PC-3 (cell line): ENCODE measurements at regions of chr19 and their contacts with region 1.

Region 1: DNA sequence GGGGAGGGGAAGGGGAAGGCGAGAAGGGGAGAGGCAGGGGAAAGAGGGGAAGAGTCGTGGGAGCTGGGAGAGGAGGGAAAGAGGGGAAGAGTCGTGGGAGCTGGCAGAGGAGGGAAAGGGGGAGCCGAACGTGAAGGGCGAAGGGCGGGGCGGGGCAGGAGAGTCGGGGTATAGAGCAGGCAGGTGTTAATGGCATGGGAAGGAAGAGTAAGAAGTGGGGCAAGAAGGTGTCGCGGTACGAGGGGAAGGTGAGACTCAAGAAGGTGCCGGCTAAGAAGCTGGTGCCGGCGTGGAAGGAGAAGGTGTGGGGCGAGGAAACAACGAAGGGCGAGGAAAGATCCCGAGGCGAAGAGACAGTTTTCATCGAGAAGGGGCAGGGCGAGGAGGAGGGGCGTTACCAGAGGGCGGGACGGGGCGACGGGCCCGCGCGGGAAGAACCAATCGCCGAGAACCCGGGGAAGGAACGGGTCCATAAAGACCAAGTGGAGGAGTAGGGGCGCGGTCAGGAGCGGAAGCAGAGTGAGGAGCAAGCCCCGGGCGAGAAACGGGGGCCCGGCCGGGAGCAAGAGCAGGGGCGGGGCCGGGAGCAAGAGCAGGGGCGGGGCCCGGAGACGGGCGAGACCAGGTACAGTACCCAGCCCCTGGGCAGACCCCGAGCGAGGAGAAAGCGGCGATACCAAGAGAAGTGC is 463 bp downstream of the CATSPERG start:
- DNase-seq: peak; percentile 93
- ATAC-seq: peak; percentile 75
- H3K4me3 ChIP-seq: peak overlapping the region; percentile 91
- H3K27ac ChIP-seq: peak overlapping the region; percentile 64
- H3K4me1 ChIP-seq: peaks cover 4% of the 10 kb centered on the region; the same call in 1 of the 2 replicates
- H3K27me3 ChIP-seq: no peaks in the 10 kb centered on the region
- CTCF ChIP-seq: no peak

Region 2: GRCh38 chr19:38224014-38224862 is 111.9 kb before region 1 on chr19 and contains the start of gene DPF1:
- CTCF ChIA-PET with region 1: no interaction called
- POLR2A ChIA-PET with region 1: no interaction called
- intact Hi-C with region 1: no loop called
- DNase-seq: peak; percentile 86
- ATAC-seq: peak; percentile 93
- H3K4me3 ChIP-seq: peak within 1 kb of the TSS; percentile 79
- H3K27ac ChIP-seq: peak within 1 kb of the TSS; percentile 16; the same call in 1 of the 2 replicates
- H3K4me1 ChIP-seq: no peaks in the 10 kb centered on the region
- H3K27me3 ChIP-seq: 0 out of 2 replicates have a peak, but pooled peaks cover 2% of the 10 kb centered on the region
- CTCF ChIP-seq: peak; percentile 41; the same call in 1 of the 2 replicates
- total RNA-seq, gene DPF1: 7.7 and 8.1 TPM in 2 replicates

Region 3: DNA sequence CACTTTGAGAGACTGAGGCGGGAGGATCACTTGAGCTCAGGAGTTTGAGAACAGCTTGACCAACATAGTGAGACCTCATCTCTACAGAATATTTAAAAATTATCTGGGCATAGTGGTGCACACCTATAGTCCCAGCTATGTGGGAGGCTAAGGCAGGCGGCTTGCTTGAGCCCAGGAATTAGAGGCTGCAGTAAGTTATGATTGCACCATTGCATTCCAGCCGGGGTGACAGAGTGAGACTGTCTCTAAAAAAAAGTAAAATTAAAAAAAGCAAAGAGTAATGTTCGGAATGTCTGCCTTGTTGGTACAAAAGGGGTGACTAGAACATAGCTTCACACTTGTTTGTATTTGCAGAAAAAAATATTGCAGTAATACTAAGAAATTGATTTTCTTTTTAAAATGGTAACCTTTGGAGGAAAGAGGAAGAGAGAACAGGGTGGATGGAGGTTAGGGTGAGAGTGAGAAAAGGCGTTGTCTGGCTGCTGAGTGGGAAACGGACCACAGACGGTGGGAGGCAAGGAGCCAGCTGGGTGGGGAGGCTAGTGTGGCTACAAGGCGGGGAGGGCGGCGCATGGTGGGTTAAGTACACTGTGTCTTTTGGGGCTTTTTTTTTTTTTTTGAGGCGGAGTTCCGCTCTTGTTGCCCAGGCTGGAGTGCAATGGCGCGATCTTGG is 90.1 kb before region 1 on chr19:
- CTCF ChIA-PET with region 1: interaction called, 3 read pairs
- POLR2A ChIA-PET with region 1: no interaction called
- intact Hi-C with region 1: loop called (anchors 1 kb)
- DNase-seq: no peak
- ATAC-seq: no peak
- H3K4me3 ChIP-seq: no peak overlapping the region
- H3K27ac ChIP-seq: no peak overlapping the region
- H3K4me1 ChIP-seq: peaks cover 4% of the 10 kb centered on the region; the same call in 1 of the 2 replicates
- H3K27me3 ChIP-seq: no peaks in the 10 kb centered on the region
- CTCF ChIP-seq: no peak

Region 4: GRCh38 chr19:38304866-38305429 is 31.1 kb before region 1 on chr19:
- CTCF ChIA-PET with region 1: no interaction called
- POLR2A ChIA-PET with region 1: no interaction called
- intact Hi-C with region 1: loop called (anchors 2 kb)
- DNase-seq: peak; percentile 95
- ATAC-seq: peak; percentile 70
- H3K4me3 ChIP-seq: peak overlapping the region; percentile 84
- H3K27ac ChIP-seq: peak overlapping the region; percentile 90
- H3K4me1 ChIP-seq: peaks cover 27% of the 10 kb centered on the region
- H3K27me3 ChIP-seq: no peaks in the 10 kb centered on the region
- CTCF ChIP-seq: no peak

Region 5: DNA sequence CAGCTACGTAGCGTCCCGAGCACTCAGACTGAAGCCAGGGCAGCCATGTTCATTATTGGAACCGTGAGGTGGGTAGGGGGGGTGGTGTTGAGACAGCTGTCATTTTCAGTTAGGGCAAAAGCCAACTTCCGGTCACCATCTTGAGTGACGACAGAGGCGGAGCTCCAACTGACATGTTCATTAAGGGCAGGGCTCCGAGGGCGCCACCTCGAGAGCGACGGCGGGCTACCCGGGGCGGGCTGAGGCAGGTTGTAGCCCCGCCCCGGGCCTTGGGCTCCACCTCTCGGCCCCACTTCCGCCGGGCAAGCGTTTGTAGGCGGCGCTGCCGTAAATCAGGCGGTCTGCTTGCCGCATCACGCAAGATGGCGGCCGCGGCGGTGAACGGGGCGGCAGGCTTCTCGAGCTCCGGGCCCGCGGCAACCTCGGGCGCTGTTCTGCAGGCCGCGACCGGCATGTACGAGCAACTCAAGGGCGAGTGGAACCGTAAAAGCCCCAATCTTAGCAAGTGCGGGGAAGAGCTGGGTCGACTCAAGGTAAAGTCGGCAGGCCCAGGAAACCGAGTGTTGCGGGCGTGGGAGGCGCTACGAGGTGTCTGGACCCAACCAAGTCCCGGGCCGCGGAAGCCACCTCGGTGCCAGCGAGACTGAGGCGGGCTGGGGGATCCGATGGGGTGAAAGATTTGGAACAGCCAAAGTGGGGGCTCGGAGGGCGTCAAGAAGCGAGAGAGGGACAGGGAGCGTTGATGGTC is 38.5 kb after region 1 on chr19 and contains the start of gene PSMD8:
- CTCF ChIA-PET with region 1: interaction called, 3 read pairs
- POLR2A ChIA-PET with region 1: no interaction called
- intact Hi-C with region 1: loop called (anchors 1 kb)
- DNase-seq: peak; percentile 96
- ATAC-seq: peak; percentile 97
- H3K4me3 ChIP-seq: peak within 1 kb of the TSS; percentile 84
- H3K27ac ChIP-seq: peak within 1 kb of the TSS; percentile 64
- H3K4me1 ChIP-seq: peaks cover 15% of the 10 kb centered on the region
- H3K27me3 ChIP-seq: no peaks in the 10 kb centered on the region
- CTCF ChIP-seq: peak; percentile 27; the same call in 1 of the 2 replicates
- total RNA-seq, gene PSMD8: 290 and 367 TPM in 2 replicates

Region 6: GRCh38 chr19:38387550-38388348 is 51.7 kb after region 1 on chr19 and contains the start of gene GGN:
- CTCF ChIA-PET with region 1: interaction called, 7 read pairs
- POLR2A ChIA-PET with region 1: no interaction called
- intact Hi-C with region 1: loop called (anchors 5 kb)
- DNase-seq: peak; percentile 87
- ATAC-seq: peak; percentile 70
- H3K4me3 ChIP-seq: peak within 1 kb of the TSS; percentile 85
- H3K27ac ChIP-seq: peak within 1 kb of the TSS; percentile 56
- H3K4me1 ChIP-seq: peaks cover 7% of the 10 kb centered on the region; the same call in 1 of the 2 replicates
- H3K27me3 ChIP-seq: no peaks in the 10 kb centered on the region
- CTCF ChIP-seq: no peak
- total RNA-seq, gene GGN: 0.29 and 0.73 TPM in 2 replicates